Colonic mucosa (tissue), 4 donors: ENCODE measurements at regions of chr10 and their contacts with region 1.

Region 1: DNA sequence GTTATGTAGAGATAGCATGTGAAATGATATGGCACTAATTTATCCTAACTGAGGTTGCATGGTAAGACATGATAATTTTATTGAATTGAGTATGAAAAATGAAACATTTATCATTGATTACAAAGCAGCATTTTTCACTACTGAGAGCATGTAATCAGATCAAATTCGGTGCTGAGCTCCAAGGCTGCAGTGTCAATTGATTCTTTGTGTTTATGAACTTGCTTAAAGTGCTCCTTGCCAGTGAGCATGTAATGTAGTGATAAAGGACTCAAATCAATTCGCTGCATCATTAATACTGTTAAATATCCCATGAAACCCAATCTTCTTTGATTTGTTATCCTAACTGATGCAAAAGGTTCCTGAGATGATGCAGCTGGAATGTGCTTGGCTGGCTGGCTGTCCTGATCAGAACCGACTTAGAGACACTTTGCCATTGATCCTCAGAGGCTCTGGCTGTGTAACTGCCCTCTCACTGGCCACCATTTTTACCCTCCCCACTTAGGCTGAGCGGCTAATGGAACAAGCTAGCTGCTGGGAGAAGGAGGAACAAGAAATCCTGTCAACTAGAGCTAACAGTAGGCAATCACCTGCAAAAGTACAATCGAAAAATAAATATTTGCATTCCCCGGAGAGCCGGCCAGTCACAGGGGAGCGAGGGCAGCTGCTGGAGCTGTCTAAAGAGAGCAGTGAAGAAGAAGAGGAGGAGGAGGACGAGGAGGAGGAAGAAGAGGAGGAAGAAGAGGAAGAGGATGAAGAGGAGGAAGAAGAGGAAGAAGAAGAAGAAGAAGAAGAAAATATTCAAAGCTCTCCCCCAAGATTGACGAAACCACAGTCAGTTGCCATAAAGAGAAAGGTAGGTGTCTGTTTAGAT is 89.8 kb upstream of the SAMD8 start:
- DNase-seq: peak; percentile 52
- H3K4me3 ChIP-seq: no peak overlapping the region
- H3K27ac ChIP-seq: no peak overlapping the region
- H3K4me1 ChIP-seq: no peaks in the 10 kb centered on the region
- H3K27me3 ChIP-seq: no peaks in the 10 kb centered on the region
- CTCF ChIP-seq: no peak

Region 2: GRCh38 chr10:74262856-74263255 is 758.8 kb before region 1 on chr10:
- intact Hi-C with region 1: loop called (anchors 5 kb)
- DNase-seq: no peak
- H3K4me3 ChIP-seq: no peak overlapping the region
- H3K27ac ChIP-seq: no peak overlapping the region
- H3K4me1 ChIP-seq: no peaks in the 10 kb centered on the region
- H3K27me3 ChIP-seq: no peaks in the 10 kb centered on the region
- CTCF ChIP-seq: no peak

Region 3: GRCh38 chr10:74813381-74814259 is 208.0 kb before region 1 on chr10:
- intact Hi-C with region 1: no loop called
- DNase-seq: no peak
- H3K4me3 ChIP-seq: no peak overlapping the region
- H3K27ac ChIP-seq: no peak overlapping the region
- H3K4me1 ChIP-seq: no peaks in the 10 kb centered on the region
- H3K27me3 ChIP-seq: no peaks in the 10 kb centered on the region
- CTCF ChIP-seq: no peak